ENCODE measurements at regions of chr16 and their contacts with region 1.

Region 1: DNA sequence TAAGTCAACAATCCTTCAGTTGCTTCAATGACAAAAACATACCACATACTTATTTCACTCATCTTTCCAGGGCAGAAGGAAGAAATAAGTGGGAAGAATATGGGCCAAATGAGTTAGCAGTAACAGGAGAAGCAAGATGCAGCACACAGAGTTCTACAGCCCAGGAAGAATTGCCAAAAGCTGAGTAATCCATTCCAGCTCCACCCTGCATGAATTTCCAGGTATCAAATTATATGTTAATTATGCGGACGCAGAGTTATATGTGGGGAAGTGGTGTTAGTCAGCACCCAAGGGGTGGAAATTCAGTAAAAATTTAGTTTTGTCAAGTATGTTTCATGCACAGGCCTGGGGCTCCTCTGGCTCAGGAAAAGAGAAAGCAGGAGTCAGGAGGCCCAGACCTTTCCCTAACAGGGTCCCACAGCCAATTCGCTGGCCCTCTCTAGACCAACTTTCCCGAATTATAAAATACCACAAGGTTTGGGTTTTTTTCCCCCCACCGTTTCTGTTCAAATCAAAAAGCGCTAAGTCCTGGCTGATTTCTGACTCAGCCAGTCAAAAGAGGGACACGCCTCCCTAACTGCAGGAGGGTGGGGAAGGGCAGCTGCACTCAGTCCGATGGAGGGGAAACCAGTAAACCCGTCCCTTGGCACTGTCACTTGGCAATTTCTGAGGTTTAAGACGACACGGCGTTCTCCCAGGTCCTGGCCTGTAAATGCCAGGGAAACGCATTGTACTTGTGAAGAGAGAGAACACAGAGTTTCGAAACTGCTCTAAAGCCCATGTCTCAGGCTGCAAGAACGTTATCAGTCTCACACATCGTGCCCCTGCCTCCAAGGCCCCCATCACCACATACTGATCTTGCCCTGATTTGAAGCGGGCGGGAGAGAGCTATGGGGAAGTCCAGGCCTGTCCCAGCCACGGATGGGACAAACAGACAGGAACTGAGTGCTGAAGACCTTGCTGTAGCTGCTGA is 58.1 kb downstream of the ZFHX3 start:
- DNase-seq: peak; percentile 94
- H3K4me3 ChIP-seq: peak overlapping the region in 1 of 3 experiments; percentile 7
- H3K27ac ChIP-seq: peak overlapping the region; percentile 78
- H3K4me1 ChIP-seq: peaks cover 46% of the 10 kb centered on the region
- H3K27me3 ChIP-seq: no peaks in the 10 kb centered on the region
- CTCF ChIP-seq: no peak

Region 2: DNA sequence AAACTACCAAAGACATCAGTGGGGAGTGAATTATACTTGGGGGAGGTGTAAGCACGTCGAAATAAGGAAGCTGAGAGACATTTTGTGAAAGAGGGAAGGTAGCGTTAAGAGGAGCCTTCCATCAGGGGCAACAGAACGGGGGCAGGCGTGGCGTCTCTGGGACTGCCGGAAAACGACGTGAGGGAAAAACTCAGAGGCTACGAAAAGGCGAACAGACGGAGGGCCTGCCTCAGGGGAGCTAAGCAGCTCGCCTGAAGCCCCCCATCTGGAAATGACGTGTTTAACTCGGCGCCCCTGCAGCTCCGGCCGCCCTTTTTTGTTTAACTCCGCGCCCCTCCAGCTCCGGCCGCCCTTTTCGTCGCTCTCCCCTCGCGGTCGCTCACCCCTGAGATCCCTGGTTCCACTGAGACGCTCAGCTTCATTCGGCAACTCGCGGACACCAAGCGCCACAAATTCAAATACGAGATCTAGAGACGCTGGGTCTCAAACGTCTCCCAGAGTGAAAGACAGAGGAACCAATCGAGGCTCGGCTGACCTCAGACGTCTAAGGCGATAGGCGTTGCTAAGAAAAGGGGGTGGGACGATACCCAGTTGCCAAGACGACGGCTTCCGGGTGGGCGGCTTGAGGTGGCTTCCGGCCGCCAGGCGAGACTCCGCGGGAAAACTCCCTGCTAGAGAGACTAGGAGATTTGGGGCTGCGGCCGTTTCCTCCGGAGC is 325.2 kb before region 1 on chr16:
- CTCF ChIA-PET with region 1: no interaction called
- dilution Hi-C with region 1: no loop called
- in situ Hi-C with region 1: no loop called
- intact Hi-C with region 1: loop called (anchors 2 kb)
- DNase-seq: peak; percentile 98
- H3K4me3 ChIP-seq: peak overlapping the region; percentile 74 to 85 (median 81)
- H3K27ac ChIP-seq: peak overlapping the region; percentile 86
- H3K4me1 ChIP-seq: peaks cover 10% of the 10 kb centered on the region
- H3K27me3 ChIP-seq: no peaks in the 10 kb centered on the region
- CTCF ChIP-seq: no peak

Region 3: GRCh38 chr16:72972878-72973571 is 16.8 kb before region 1 on chr16:
- CTCF ChIA-PET with region 1: no interaction called
- dilution Hi-C with region 1: no loop called
- in situ Hi-C with region 1: no loop called
- intact Hi-C with region 1: loop called (anchors 1 kb)
- DNase-seq: peak; percentile 93
- H3K4me3 ChIP-seq: no peak overlapping the region
- H3K27ac ChIP-seq: peak overlapping the region; percentile 26
- H3K4me1 ChIP-seq: peaks cover 17% of the 10 kb centered on the region
- H3K27me3 ChIP-seq: no peaks in the 10 kb centered on the region
- CTCF ChIP-seq: no peak